ENCODE measurements at regions of chrX and their contacts with region 1.

Region 1: GRCh38 chrX:50100188-50100587 is 100.6 kb downstream of the AKAP4 start:
- DNase-seq: no peak
- H3K4me3 ChIP-seq: no peak overlapping the region
- H3K27ac ChIP-seq: no peak overlapping the region
- H3K4me1 ChIP-seq: no peaks in the 10 kb centered on the region
- H3K27me3 ChIP-seq: no peaks in the 10 kb centered on the region
- CTCF ChIP-seq: no peak

Region 2: GRCh38 chrX:49915361-49916222 is 184.6 kb before region 1 on chrX:
- intact Hi-C with region 1: loop called (anchors 10 kb)
- DNase-seq: peak; percentile 56
- H3K4me3 ChIP-seq: no peak overlapping the region
- H3K27ac ChIP-seq: no peak overlapping the region
- H3K4me1 ChIP-seq: no peaks in the 10 kb centered on the region
- H3K27me3 ChIP-seq: no peaks in the 10 kb centered on the region
- CTCF ChIP-seq: peak; percentile 96

Region 3: GRCh38 chrX:50204364-50204899 is 104.2 kb after region 1 on chrX and contains the start of gene CCNB3:
- intact Hi-C with region 1: loop called (anchors 5 kb)
- DNase-seq: peak; percentile 63
- H3K4me3 ChIP-seq: no peak within 1 kb of the TSS
- H3K27ac ChIP-seq: no peak within 1 kb of the TSS
- H3K4me1 ChIP-seq: no peaks in the 10 kb centered on the region
- H3K27me3 ChIP-seq: no peaks in the 10 kb centered on the region
- CTCF ChIP-seq: peak; percentile 71
- total RNA-seq, gene CCNB3: 0.11 to 0.30 TPM

Region 4: GRCh38 chrX:50448565-50448964 is 348.4 kb after region 1 on chrX:
- intact Hi-C with region 1: loop called (anchors 10 kb)
- DNase-seq: peak; percentile 52
- H3K4me3 ChIP-seq: no peak overlapping the region
- H3K27ac ChIP-seq: no peak overlapping the region
- H3K4me1 ChIP-seq: no peaks in the 10 kb centered on the region
- H3K27me3 ChIP-seq: no peaks in the 10 kb centered on the region
- CTCF ChIP-seq: peak; percentile 34

Region 5: GRCh38 chrX:50579955-50580354 is 479.8 kb after region 1 on chrX:
- intact Hi-C with region 1: loop called (anchors 5 kb)
- DNase-seq: peak; percentile 32
- H3K4me3 ChIP-seq: no peak overlapping the region
- H3K27ac ChIP-seq: no peak overlapping the region
- H3K4me1 ChIP-seq: no peaks in the 10 kb centered on the region
- H3K27me3 ChIP-seq: no peaks in the 10 kb centered on the region
- CTCF ChIP-seq: peak; percentile 36